IMR-90 (cell line): ENCODE measurements at regions of chr12 and their contacts with region 1.

Region 1: DNA sequence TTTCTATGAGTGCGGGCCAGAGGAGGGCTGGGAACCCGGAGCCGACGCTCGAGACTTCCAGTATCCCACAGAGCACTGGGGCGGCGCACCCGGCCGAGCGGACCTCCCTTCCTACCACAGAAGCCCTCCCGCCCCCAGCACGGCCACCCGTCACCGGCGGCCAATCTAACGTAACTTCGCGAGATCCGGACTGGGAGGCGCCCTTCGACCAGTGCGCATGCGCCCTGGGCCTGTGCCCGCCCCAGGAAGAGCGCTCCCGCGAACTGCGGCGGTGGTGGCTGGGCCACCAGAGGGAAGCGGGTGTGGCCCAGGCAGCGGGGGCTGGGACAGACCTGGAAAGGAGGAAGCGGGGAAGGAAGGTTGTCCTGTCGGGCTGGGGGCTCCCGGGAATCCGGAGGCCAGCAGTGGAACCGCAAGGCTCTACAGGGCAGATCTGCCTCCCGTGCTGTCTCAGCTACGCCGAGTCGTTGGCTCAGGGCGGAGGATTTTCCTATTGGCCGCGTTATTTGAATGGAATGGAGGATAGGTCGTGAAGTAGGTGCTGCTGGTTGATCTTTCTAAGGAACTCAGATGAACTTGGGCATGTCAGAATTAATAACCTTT is at the start of gene PPP1R12A:
- DNase-seq: peak; percentile 97
- ATAC-seq: peak; percentile 94
- H3K4me3 ChIP-seq: peak within 1 kb of the TSS; percentile 93
- H3K27ac ChIP-seq: peak within 1 kb of the TSS; percentile 98
- H3K4me1 ChIP-seq: no peaks in the 10 kb centered on the region
- H3K27me3 ChIP-seq: no peaks in the 10 kb centered on the region
- CTCF ChIP-seq: no peak
- POLR2A ChIP-seq: peak; percentile 93
- RAD21 ChIP-seq: no peak
- total RNA-seq, gene PPP1R12A: 112 and 204 TPM in 2 replicates

Region 2: DNA sequence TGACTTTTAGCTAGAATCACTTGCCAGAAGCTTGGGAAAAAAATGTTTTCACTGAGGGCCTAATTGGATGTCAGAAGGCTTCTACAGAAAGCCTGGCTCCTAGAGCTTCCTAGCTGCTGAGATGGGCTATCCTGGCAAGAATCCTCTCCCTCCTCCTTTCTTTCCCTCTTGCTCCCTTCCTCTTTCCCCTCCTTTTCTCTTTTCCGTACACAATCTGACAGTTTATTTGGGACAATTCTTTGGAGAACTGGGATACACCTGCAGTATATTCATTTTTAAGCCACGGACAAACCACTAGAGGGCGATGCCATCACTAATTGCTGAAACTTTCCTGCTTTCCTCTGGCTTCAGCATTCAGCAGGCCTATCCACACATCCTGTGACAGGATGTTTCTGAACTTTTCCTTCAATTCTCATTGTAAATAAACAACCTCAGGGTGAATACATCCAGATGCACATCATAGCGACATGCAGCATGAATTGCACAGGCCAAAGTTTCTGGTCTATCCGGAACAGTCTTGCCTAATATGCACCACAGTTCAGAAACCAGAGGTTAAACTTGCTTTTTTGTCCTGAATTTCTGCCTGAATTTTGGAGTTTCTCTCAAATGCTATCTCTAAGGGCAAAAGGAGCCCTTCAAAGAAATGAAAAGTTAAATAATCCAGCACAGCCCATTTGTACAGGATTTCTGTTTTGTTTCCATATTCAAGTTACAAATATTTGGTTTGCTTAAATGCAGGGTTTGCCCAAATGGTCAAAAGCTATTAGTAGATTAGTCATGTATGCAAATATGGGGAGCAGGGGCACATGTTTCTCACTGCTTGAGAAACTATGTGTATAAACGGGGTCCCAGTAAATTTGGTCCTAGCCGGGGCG is 387.1 kb before region 1 on chr12:
- CTCF ChIA-PET with region 1: no interaction called
- POLR2A ChIA-PET with region 1: no interaction called
- dilution Hi-C with region 1: no loop called
- in situ Hi-C with region 1: no loop called
- intact Hi-C with region 1: loop called (anchors 1 kb)
- DNase-seq: peak; percentile 83
- ATAC-seq: peak; percentile 68
- H3K4me3 ChIP-seq: no peak overlapping the region
- H3K27ac ChIP-seq: peak overlapping the region; percentile 67
- H3K4me1 ChIP-seq: peaks cover 19% of the 10 kb centered on the region
- H3K27me3 ChIP-seq: no peaks in the 10 kb centered on the region
- CTCF ChIP-seq: peak; percentile 68
- POLR2A ChIP-seq: no peak
- RAD21 ChIP-seq: peak; percentile 62

Region 3: GRCh38 chr12:79690638-79691493 is 244.3 kb before region 1 on chr12 and contains the start of gene PAWR:
- CTCF ChIA-PET with region 1: no interaction called
- POLR2A ChIA-PET with region 1: no interaction called
- dilution Hi-C with region 1: no loop called
- in situ Hi-C with region 1: no loop called
- intact Hi-C with region 1: loop called (anchors 5 kb)
- DNase-seq: peak; percentile 93
- ATAC-seq: peak; percentile 60
- H3K4me3 ChIP-seq: peak within 1 kb of the TSS; percentile 96
- H3K27ac ChIP-seq: peak within 1 kb of the TSS; percentile 79
- H3K4me1 ChIP-seq: peaks cover 12% of the 10 kb centered on the region; the same call in 1 of the 2 replicates
- H3K27me3 ChIP-seq: no peaks in the 10 kb centered on the region
- CTCF ChIP-seq: peak; percentile 30
- POLR2A ChIP-seq: peak; percentile 80
- RAD21 ChIP-seq: no peak
- total RNA-seq, gene PAWR: 13.6 and 34.4 TPM in 2 replicates

Region 4: GRCh38 chr12:79826267-79827128 is 108.6 kb before region 1 on chr12:
- CTCF ChIA-PET with region 1: no interaction called
- POLR2A ChIA-PET with region 1: no interaction called
- dilution Hi-C with region 1: no loop called
- in situ Hi-C with region 1: no loop called
- intact Hi-C with region 1: loop called (anchors 10 kb)
- DNase-seq: no peak
- ATAC-seq: no peak
- H3K4me3 ChIP-seq: no peak overlapping the region
- H3K27ac ChIP-seq: no peak overlapping the region
- H3K4me1 ChIP-seq: no peaks in the 10 kb centered on the region
- H3K27me3 ChIP-seq: no peaks in the 10 kb centered on the region
- CTCF ChIP-seq: no peak
- POLR2A ChIP-seq: no peak
- RAD21 ChIP-seq: no peak

Region 5: GRCh38 chr12:80044694-80045046 is 109.5 kb after region 1 on chr12:
- CTCF ChIA-PET with region 1: no interaction called
- POLR2A ChIA-PET with region 1: no interaction called
- dilution Hi-C with region 1: no loop called
- in situ Hi-C with region 1: no loop called
- intact Hi-C with region 1: loop called (anchors 2 kb)
- DNase-seq: peak; percentile 94
- ATAC-seq: peak; percentile 65
- H3K4me3 ChIP-seq: no peak overlapping the region
- H3K27ac ChIP-seq: no peak overlapping the region; the same call in 1 of the 2 replicates
- H3K4me1 ChIP-seq: peaks cover 4% of the 10 kb centered on the region; the same call in 1 of the 2 replicates
- H3K27me3 ChIP-seq: no peaks in the 10 kb centered on the region
- CTCF ChIP-seq: no peak
- POLR2A ChIP-seq: no peak
- RAD21 ChIP-seq: no peak

Region 6: DNA sequence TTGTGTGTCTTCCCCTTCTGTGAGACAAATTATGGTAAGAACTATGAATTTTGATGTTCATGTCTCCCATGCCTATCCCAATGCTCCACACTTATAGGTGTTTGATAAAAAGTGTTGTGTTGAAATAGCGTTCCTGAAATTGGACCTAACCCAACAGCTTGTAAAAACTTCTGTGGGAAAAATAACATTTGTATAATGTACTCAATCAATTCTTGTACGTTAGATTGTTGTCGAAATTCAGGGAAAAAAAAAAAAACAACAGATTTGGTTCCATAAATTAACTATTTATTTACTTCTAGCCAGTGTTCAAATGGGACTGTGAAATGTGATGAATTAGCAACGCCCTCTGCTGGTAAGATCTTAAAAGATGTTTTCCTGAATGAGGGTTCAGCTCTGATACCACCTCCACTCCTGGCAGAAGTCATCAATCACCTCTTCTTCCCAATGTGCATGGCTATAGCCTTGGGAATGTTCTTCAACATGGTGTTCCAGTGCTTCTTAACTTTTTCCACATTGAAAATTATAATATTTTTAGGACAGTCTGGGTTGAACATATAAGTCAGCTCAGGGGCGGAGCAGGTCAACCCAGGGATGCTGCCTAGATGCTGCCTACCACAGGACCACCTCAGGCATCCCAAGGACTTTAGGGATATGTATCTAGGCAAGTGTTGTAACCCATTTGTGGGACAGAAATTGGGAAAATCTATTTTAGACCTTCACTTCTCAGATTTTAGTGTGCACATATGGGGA is 334.9 kb after region 1 on chr12:
- CTCF ChIA-PET with region 1: no interaction called
- POLR2A ChIA-PET with region 1: no interaction called
- dilution Hi-C with region 1: no loop called
- in situ Hi-C with region 1: no loop called
- intact Hi-C with region 1: loop called (anchors 2 kb)
- DNase-seq: peak; percentile 60
- ATAC-seq: peak; percentile 64
- H3K4me3 ChIP-seq: no peak overlapping the region
- H3K27ac ChIP-seq: no peak overlapping the region
- H3K4me1 ChIP-seq: peaks cover 4% of the 10 kb centered on the region
- H3K27me3 ChIP-seq: no peaks in the 10 kb centered on the region
- CTCF ChIP-seq: peak; percentile 70
- POLR2A ChIP-seq: no peak
- RAD21 ChIP-seq: peak; percentile 66

Region 7: DNA sequence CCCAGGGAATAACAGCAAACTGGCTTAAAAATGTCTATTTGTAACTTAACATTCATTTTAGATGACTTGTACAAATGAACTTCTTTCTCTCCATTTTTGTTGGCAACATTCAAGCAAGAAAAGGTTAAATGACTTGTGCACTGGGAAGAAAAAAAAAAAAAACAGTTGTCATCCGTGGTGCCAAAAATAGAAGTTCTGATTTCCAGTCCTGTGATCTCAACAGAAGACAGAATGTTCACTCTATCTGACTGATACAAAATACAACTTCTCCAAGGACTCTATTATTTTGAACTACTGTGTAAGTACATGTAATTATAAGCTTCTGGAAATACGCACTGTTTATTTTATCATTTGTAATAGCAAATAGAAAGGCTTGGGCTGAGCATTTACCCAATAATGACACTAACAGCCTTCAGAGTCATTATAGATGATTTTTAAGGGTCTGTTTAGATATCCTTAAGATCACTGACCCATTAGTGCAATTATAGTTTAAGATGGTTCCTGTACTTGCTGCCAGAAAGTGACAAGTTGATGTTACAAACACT is 942.7 kb after region 1 on chr12:
- CTCF ChIA-PET with region 1: no interaction called
- POLR2A ChIA-PET with region 1: no interaction called
- dilution Hi-C with region 1: no loop called
- in situ Hi-C with region 1: no loop called
- intact Hi-C with region 1: no loop called
- DNase-seq: peak; percentile 49
- ATAC-seq: 0 out of 2 replicates have a peak, but pooled peaks have one; percentile 11
- H3K4me3 ChIP-seq: no peak overlapping the region
- H3K27ac ChIP-seq: no peak overlapping the region
- H3K4me1 ChIP-seq: 0 out of 2 replicates have a peak, but pooled peaks cover 3% of the 10 kb centered on the region
- H3K27me3 ChIP-seq: no peaks in the 10 kb centered on the region
- CTCF ChIP-seq: no peak
- POLR2A ChIP-seq: no peak
- RAD21 ChIP-seq: no peak